Prostate gland (tissue), 2 donors: ENCODE measurements at regions of chr14 and their contacts with region 1.

Region 1: GRCh38 chr14:35404449-35405303 is at the start of gene NFKBIA:
- DNase-seq: peak; percentile 87
- H3K4me3 ChIP-seq: peak within 1 kb of the TSS; percentile 97 to 99
- H3K27ac ChIP-seq: peak within 1 kb of the TSS; percentile 100
- H3K4me1 ChIP-seq: peaks cover 4% of the 10 kb centered on the region
- H3K27me3 ChIP-seq: no peaks in the 10 kb centered on the region
- CTCF ChIP-seq: peak in 3 of 4 experiments; percentile 29 to 52 (median 34)
- POLR2A ChIP-seq: peak; percentile 98
- total RNA-seq, gene NFKBIA: 294 to 415 TPM

Region 2: GRCh38 chr14:34875031-34875922 is 529.4 kb before region 1 on chr14 and contains the start of gene BAZ1A:
- intact Hi-C with region 1: loop called (anchors 10 kb)
- DNase-seq: peak; percentile 78
- H3K4me3 ChIP-seq: peak within 1 kb of the TSS; percentile 73 to 80
- H3K27ac ChIP-seq: peak within 1 kb of the TSS; percentile 99 to 100
- H3K4me1 ChIP-seq: no peaks in the 10 kb centered on the region
- H3K27me3 ChIP-seq: no peaks in the 10 kb centered on the region
- CTCF ChIP-seq: peak in 2 of 4 experiments; percentile 30 to 42
- POLR2A ChIP-seq: peak; percentile 97
- total RNA-seq, gene BAZ1A: 25.3 to 31.5 TPM

Region 3: DNA sequence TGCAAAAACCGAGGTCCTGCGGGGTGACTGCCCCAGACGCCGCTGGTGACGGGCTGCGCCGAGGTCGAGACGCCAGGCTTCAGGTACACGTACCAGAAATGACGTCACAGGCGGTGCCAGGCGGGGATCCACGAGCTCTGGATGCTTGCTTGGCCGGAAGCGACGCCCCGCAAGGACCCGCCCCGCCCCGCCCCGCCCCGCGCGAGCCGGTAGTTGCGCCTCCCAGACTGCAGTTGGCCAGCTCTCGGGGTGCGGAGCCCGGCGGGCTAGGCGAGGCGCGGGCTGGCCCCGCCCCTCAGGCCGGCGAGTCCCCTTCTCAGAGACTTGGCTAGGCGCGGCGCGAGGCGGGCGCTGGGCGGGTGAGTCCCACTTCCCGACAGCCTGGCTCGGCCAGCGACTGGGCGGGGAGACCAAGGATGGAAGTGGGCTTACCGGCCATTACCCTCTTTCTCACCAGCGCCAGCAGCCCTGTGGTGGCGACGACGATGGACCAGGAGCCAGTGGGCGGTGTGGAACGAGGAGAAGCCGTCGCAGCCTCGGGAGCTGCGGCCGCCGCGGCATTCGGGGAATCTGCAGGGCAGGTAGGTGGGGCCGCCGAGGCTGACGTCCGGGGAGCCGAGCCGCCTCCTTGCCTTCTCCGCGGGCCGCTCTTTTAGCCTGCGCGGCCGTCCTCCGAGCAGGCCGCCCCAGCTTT is 358.5 kb before region 1 on chr14 and contains the start of gene FAM177A1:
- intact Hi-C with region 1: loop called (anchors 2 kb)
- DNase-seq: peak; percentile 99
- H3K4me3 ChIP-seq: peak within 1 kb of the TSS; percentile 74 to 92
- H3K27ac ChIP-seq: peak within 1 kb of the TSS; percentile 98 to 100
- H3K4me1 ChIP-seq: no peaks in the 10 kb centered on the region
- H3K27me3 ChIP-seq: no peaks in the 10 kb centered on the region
- CTCF ChIP-seq: peak in 2 of 4 experiments; percentile 24 to 53
- POLR2A ChIP-seq: peak; percentile 96
- total RNA-seq, gene FAM177A1: 58.1 to 89.8 TPM

Region 4: GRCh38 chr14:35215110-35215876 is 189.4 kb before region 1 on chr14:
- intact Hi-C with region 1: loop called (anchors 2 kb)
- DNase-seq: no peak
- H3K4me3 ChIP-seq: no peak overlapping the region
- H3K27ac ChIP-seq: no peak overlapping the region
- H3K4me1 ChIP-seq: peaks cover 5% of the 10 kb centered on the region
- H3K27me3 ChIP-seq: no peaks in the 10 kb centered on the region
- CTCF ChIP-seq: peak in 3 of 4 experiments; percentile 29 to 52 (median 46)
- POLR2A ChIP-seq: no peak

Region 5: GRCh38 chr14:35341446-35342159 is 63.1 kb before region 1 on chr14:
- intact Hi-C with region 1: loop called (anchors 2 kb)
- DNase-seq: peak; percentile 99
- H3K4me3 ChIP-seq: peak overlapping the region in 1 of 2 donors; percentile 11
- H3K27ac ChIP-seq: peak overlapping the region; percentile 94 to 95
- H3K4me1 ChIP-seq: peaks cover 17% of the 10 kb centered on the region
- H3K27me3 ChIP-seq: no peaks in the 10 kb centered on the region
- CTCF ChIP-seq: peak in 1 of 4 experiments; percentile 1
- POLR2A ChIP-seq: peak; percentile 77